ENCODE measurements at regions of chr6 and their contacts with region 1.

Region 1: DNA sequence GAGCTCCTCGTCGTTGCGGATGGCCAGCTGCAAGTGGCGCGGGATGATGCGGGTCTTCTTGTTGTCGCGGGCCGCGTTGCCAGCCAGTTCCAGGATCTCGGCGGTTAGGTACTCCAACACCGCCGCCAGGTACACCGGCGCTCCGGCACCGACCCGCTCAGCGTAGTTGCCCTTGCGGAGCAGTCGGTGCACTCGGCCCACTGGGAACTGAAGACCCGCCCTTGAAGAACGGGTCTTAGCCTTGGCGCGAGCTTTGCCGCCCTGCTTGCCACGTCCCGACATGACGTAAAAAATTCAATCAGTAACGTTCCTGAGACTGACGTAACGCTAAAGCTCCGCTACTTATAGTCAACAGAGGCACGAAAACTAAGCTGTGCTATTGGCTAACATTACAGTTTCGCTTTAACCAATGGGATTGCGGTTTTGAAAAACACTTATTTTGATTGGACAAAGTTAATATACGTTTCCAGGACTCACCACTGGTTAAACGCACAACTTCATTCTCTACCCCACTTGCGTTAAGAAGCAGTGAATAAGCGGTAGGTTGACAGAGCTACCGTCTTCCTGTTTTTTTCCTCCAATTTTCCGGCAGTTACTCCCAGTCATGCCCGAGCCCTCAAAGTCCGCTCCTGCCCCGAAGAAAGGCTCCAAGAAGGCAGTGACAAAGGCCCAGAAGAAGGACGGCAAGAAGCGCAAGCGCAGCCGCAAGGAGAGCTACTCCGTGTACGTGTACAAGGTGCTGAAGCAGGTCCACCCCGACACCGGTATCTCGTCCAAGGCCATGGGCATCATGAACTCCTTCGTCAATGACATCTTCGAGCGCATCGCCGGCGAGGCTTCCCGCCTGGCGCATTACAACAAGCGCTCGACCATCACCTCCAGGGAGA is 73.9 kb downstream of the OR2B2 start:
- DNase-seq: peak; percentile 100
- ATAC-seq: peak; percentile 81
- H3K4me3 ChIP-seq: peak overlapping the region; percentile 87
- H3K27ac ChIP-seq: peak overlapping the region; percentile 93
- H3K4me1 ChIP-seq: no peaks in the 10 kb centered on the region
- H3K27me3 ChIP-seq: no peaks in the 10 kb centered on the region
- CTCF ChIP-seq: no peak
- EP300 ChIP-seq: 0 out of 4 replicates have a peak, but pooled peaks of 1 of the 2 experiments have one; percentile 3
- POLR2A ChIP-seq: peak; percentile 81
- RAD21 ChIP-seq: no peak

Region 2: DNA sequence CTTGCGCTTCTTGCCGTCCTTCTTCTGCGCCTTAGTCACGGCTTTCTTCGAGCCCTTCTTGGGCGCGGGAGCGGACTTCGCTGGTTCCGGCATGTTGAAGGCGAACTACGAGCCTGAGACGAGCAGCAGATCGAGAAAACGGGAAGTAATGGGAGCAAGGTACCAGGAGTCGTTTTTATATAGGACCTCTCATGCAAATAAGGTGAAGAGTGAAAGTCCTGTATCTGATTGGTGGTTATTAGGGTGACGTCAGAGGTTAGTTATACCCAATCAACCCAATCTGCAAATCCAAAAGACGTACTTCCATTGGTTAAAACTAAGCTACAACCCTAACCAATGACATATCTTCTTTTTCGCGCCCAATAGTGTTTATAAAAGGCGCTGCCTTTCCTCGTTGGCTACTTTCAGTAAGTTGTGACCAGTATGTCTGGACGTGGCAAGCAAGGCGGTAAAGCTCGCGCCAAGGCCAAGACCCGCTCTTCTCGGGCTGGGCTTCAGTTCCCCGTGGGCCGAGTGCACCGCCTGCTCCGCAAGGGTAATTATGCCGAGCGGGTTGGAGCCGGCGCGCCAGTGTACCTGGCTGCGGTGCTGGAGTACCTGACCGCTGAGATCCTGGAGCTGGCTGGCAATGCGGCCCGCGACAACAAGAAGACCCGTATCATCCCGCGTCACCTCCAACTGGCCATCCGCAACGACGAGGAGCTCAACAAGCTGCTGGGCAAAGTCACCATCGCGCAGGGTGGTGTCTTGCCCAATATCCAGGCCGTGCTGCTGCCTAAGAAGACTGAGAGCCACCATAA is 691.4 kb before region 1 on chr6:
- CTCF ChIA-PET with region 1: no interaction called
- POLR2A ChIA-PET with region 1: interaction called, 10 read pairs
- RAD21 ChIA-PET with region 1: no interaction called
- SMC1A ChIA-PET with region 1: interaction called, 3 read pairs
- in situ Hi-C with region 1: no loop called
- intact Hi-C with region 1: no loop called
- DNase-seq: peak; percentile 100
- ATAC-seq: peak; percentile 73
- H3K4me3 ChIP-seq: peak overlapping the region; percentile 92
- H3K27ac ChIP-seq: peak overlapping the region; percentile 98
- H3K4me1 ChIP-seq: peaks cover 10% of the 10 kb centered on the region; the same call in 1 of the 2 replicates
- H3K27me3 ChIP-seq: no peaks in the 10 kb centered on the region
- CTCF ChIP-seq: no peak
- EP300 ChIP-seq: no peak; a peak in 1 of 4 replicates
- POLR2A ChIP-seq: peak; percentile 88
- RAD21 ChIP-seq: no peak

Region 3: GRCh38 chr6:27748662-27749244 is 89.5 kb before region 1 on chr6:
- CTCF ChIA-PET with region 1: no interaction called
- POLR2A ChIA-PET with region 1: no interaction called
- RAD21 ChIA-PET with region 1: no interaction called
- SMC1A ChIA-PET with region 1: no interaction called
- in situ Hi-C with region 1: no loop called
- intact Hi-C with region 1: no loop called
- DNase-seq: no peak
- ATAC-seq: no peak
- H3K4me3 ChIP-seq: no peak overlapping the region
- H3K27ac ChIP-seq: no peak overlapping the region
- H3K4me1 ChIP-seq: peaks cover 3% of the 10 kb centered on the region; the same call in 1 of the 2 replicates
- H3K27me3 ChIP-seq: no peaks in the 10 kb centered on the region
- CTCF ChIP-seq: no peak
- EP300 ChIP-seq: no peak
- POLR2A ChIP-seq: no peak
- RAD21 ChIP-seq: no peak

Region 4: DNA sequence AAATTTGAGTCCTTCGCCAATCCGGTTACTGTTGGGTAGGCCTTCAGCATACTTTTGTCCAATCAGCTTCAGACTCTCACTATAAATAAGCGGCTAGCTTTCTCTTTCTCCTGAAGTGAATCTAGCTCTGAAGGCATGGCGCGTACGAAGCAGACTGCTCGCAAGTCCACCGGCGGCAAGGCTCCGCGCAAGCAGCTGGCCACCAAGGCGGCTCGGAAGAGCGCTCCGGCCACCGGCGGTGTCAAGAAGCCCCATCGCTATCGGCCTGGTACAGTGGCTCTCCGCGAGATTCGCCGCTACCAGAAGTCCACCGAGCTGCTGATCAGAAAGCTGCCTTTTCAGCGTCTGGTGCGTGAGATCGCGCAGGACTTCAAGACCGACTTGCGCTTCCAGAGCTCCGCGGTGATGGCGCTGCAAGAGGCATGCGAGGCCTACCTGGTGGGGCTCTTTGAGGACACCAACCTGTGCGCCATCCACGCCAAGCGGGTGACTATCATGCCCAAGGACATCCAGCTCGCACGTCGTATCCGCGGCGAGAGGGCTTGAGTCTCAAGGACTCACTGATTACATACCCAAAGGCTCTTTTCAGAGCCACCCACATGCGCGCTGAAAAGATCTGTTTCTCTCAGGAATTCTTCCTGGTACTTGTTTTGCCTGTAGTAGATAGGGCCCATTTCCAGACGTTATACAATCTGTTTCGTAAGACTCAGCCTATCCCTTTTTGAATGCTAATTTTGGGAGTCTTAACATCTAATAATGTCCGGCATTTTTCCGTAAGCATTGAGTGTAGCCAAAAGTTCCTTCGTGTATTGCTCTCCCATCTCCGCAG is 28.1 kb before region 1 on chr6:
- CTCF ChIA-PET with region 1: interaction called, 6 read pairs
- POLR2A ChIA-PET with region 1: interaction called, 71 read pairs
- RAD21 ChIA-PET with region 1: interaction called, 11 read pairs
- SMC1A ChIA-PET with region 1: interaction called, 6 read pairs
- in situ Hi-C with region 1: no loop called
- intact Hi-C with region 1: no loop called
- DNase-seq: peak; percentile 98
- ATAC-seq: peak; percentile 43
- H3K4me3 ChIP-seq: peak overlapping the region; percentile 74
- H3K27ac ChIP-seq: peak overlapping the region; percentile 82
- H3K4me1 ChIP-seq: peaks cover 25% of the 10 kb centered on the region
- H3K27me3 ChIP-seq: no peaks in the 10 kb centered on the region
- CTCF ChIP-seq: peak in 1 of 3 experiments; percentile 19; a peak in 2 of 6 replicates
- EP300 ChIP-seq: no peak
- POLR2A ChIP-seq: peak; percentile 95
- RAD21 ChIP-seq: no peak

Region 5: DNA sequence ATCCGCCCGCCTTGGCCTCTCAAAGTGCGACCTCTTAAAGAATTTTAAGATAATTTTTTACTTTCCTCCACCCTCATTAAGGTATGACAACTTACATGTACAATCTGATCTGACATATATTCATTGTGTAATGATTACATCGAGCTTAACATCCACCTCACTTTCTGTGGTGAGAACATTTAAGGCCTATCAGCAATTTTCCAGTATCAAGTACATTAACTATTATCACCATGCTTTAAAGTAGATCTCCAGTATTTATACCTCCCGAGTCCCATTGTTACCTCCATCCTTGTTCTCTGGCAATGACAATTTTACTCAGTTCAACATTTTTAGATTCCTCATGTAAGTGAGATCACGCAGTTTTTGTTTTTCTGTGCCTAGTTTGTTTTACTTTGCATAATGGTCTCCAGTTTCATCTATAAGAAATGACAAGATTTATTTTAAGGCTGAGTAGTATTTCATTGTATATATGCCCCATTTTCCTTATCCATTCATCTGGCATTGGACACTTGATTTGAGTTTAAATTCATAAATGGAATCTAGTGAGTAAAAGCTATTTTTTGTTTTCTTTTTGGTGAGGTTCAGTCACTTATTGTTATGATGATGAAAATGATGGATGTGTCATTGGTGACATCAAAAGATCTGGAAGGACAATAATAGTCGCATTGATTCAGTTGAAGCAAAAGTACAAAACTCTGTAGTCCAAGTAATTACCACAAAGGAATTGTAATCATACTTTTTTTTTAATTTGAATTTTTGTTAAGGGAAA is 13.1 kb before region 1 on chr6:
- CTCF ChIA-PET with region 1: interaction called, 31 read pairs
- POLR2A ChIA-PET with region 1: interaction called, 53 read pairs
- RAD21 ChIA-PET with region 1: interaction called, 11 read pairs
- SMC1A ChIA-PET with region 1: interaction called, 73 read pairs
- in situ Hi-C with region 1: no loop called
- intact Hi-C with region 1: no loop called
- DNase-seq: no peak
- ATAC-seq: peak; percentile 7; the same call in 2 of the 3 replicates
- H3K4me3 ChIP-seq: peak overlapping the region; percentile 66
- H3K27ac ChIP-seq: peak overlapping the region; percentile 96
- H3K4me1 ChIP-seq: no peaks in the 10 kb centered on the region
- H3K27me3 ChIP-seq: no peaks in the 10 kb centered on the region
- CTCF ChIP-seq: no peak
- EP300 ChIP-seq: no peak
- POLR2A ChIP-seq: no peak
- RAD21 ChIP-seq: no peak

Region 6: GRCh38 chr6:27864906-27865849 is 26.9 kb after region 1 on chr6:
- CTCF ChIA-PET with region 1: interaction called, 12 read pairs
- POLR2A ChIA-PET with region 1: interaction called, 71 read pairs
- RAD21 ChIA-PET with region 1: interaction called, 30 read pairs
- SMC1A ChIA-PET with region 1: interaction called, 26 read pairs
- in situ Hi-C with region 1: no loop called
- intact Hi-C with region 1: loop called (anchors 1 kb)
- DNase-seq: peak; percentile 99
- ATAC-seq: peak; percentile 63
- H3K4me3 ChIP-seq: peak overlapping the region; percentile 75
- H3K27ac ChIP-seq: peak overlapping the region; percentile 95
- H3K4me1 ChIP-seq: peaks cover 39% of the 10 kb centered on the region
- H3K27me3 ChIP-seq: no peaks in the 10 kb centered on the region
- CTCF ChIP-seq: no peak
- EP300 ChIP-seq: no peak
- POLR2A ChIP-seq: peak; percentile 94
- RAD21 ChIP-seq: no peak

Region 7: DNA sequence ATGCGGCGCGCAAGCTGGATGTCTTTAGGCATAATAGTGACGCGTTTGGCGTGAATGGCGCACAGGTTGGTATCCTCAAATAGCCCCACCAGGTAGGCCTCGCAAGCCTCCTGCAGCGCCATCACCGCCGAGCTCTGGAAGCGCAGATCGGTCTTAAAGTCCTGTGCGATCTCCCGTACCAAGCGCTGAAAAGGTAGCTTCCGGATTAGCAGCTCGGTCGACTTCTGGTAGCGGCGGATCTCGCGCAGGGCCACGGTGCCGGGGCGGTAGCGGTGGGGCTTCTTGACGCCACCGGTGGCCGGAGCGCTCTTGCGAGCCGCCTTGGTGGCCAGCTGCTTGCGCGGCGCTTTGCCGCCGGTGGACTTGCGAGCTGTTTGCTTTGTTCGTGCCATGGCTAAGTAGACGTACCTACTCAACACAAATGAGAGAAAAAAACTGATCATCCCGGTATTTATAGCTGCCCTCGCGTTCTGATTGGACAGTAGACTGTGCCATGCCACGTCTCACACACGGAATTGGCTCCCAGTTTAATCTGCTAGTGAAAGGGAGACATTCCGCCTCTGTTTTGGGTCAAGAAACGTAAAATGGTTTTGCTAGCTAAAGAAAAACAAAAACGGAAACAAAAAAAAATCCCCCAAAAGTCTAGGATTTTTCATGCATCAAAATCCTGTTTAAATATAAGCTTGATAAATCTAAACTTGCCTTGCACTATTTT is 33.8 kb after region 1 on chr6:
- CTCF ChIA-PET with region 1: no interaction called
- POLR2A ChIA-PET with region 1: interaction called, 17 read pairs
- RAD21 ChIA-PET with region 1: interaction called, 30 read pairs
- SMC1A ChIA-PET with region 1: interaction called, 17 read pairs
- in situ Hi-C with region 1: no loop called
- intact Hi-C with region 1: no loop called
- DNase-seq: peak; percentile 99
- ATAC-seq: peak; percentile 73
- H3K4me3 ChIP-seq: peak overlapping the region; percentile 69
- H3K27ac ChIP-seq: peak overlapping the region; percentile 97
- H3K4me1 ChIP-seq: peaks cover 20% of the 10 kb centered on the region
- H3K27me3 ChIP-seq: no peaks in the 10 kb centered on the region
- CTCF ChIP-seq: peak; percentile 29 to 44 (median 43); a peak in 5 of 6 replicates
- EP300 ChIP-seq: no peak
- POLR2A ChIP-seq: peak; percentile 97
- RAD21 ChIP-seq: no peak

Region 8: DNA sequence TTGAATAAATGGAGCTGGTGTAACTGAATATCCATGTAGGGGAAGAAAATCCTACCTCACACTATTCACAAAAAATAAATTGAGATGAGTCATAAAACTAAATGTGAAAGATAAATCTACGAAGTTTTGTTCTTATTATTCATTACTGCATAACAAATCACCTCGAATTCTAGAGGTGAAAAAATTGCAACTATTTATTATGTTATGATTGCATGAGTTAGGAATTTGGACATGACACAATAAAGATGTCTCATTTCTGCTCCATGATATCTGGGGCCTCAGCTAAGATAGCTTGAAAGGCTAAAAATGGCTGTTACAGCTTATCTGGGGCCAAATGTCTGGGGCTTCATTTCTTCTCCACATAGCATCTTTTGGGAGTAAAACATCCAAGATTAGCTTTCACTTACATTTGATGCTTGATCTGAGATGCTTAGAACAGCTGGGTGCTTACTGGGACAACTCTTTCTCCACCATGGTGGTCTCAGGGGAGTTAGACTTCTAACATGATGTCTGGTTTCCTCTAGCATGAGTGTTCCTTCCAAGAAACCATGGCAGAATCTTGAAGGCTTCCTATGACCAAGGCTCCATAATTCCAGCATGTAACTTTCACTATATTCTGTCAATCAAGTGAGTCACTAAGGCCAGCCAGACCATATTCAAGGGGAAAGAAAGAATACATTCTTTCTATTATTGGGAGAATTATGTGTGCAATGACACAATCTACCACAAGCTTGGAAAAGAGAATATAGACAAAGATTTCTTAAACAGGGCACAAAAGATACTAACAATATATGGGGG is 148.8 kb after region 1 on chr6:
- CTCF ChIA-PET with region 1: no interaction called
- POLR2A ChIA-PET with region 1: no interaction called
- RAD21 ChIA-PET with region 1: no interaction called
- SMC1A ChIA-PET with region 1: no interaction called
- in situ Hi-C with region 1: no loop called
- intact Hi-C with region 1: no loop called
- DNase-seq: no peak
- ATAC-seq: no peak
- H3K4me3 ChIP-seq: no peak overlapping the region
- H3K27ac ChIP-seq: no peak overlapping the region
- H3K4me1 ChIP-seq: no peaks in the 10 kb centered on the region
- H3K27me3 ChIP-seq: peaks cover 0 to 3% of the 10 kb centered on the region in 2 experiments; a peak in 2 of 4 replicates
- CTCF ChIP-seq: no peak
- EP300 ChIP-seq: no peak
- POLR2A ChIP-seq: no peak
- RAD21 ChIP-seq: no peak